PC-3 (cell line): ENCODE measurements at regions of chr18 and their contacts with region 1.

Region 1: DNA sequence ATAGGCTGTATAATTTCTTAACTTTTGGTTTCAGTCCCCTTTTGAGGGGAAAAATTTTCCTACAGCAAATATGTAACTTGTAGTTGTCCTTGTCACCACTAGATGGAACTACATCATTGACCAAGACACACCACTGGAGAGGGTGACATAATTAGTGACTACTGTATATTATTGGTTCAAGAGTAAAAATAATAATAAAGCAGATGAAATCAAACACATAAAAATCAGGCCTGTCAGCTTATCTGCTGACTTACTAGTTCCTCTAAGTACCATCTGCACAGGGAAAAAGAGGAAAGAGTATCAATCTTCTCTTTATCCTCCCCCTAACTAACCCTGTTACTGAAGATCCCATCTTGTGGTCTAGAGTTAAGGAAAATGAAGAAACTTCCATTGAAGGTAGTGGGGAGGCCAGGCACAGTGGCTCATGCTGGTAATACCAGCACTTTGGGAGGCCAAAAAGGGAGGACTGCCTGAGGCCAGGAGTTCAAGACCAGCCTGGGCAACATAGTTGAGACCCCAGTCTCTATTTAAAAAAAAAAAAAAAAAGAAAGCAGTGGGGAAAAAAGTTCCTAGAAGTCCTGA is 29.6 kb upstream of the ENOSF1 start:
- DNase-seq: peak; percentile 53
- ATAC-seq: peak; percentile 81
- H3K4me3 ChIP-seq: no peak overlapping the region
- H3K27ac ChIP-seq: no peak overlapping the region
- H3K4me1 ChIP-seq: no peaks in the 10 kb centered on the region
- H3K27me3 ChIP-seq: no peaks in the 10 kb centered on the region
- CTCF ChIP-seq: peak; percentile 86

Region 2: DNA sequence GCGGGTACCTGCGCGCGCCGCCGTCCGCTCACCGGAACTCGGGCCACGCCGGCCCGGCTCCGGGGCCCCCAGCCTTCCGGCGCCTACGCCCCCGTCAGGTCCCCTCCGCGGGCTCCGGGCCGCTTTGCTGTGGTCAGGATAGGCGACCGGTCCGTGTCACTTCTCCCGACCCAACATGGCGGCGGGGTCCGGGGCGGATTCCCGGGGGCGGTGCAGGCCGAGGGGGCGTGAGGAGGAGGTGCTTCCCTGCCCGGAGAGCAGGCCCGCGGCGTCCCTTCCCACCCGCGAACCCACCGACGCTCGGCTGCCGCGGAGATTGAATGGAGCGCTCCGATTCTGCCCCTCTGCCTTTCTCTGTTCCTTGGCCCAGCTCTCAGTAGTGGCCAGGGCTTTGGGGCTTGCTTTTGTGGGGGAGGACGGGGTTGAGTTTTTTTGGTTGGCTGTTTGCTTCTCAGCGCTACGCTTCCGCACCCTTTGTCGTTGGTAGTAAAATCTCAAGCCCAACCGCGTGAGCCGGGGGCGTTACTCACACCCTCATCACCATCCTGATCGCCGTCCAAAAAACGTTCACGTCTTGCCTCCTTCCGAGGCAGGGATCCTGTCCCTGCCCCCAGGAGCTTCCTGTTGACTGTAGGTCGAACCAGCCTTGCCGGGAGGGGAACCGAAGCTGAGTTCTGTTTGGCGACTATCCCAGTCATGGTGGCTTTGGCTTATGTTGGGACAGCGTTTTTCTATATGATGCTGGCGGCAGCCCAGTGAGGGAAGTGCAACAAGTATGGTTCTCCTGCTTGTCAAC is 70.6 kb after region 1 on chr18:
- CTCF ChIA-PET with region 1: no interaction called
- POLR2A ChIA-PET with region 1: no interaction called
- intact Hi-C with region 1: loop called (anchors 5 kb)
- DNase-seq: peak; percentile 95
- ATAC-seq: peak; percentile 67
- H3K4me3 ChIP-seq: peak overlapping the region; percentile 100
- H3K27ac ChIP-seq: peak overlapping the region; percentile 97
- H3K4me1 ChIP-seq: peaks cover 12% of the 10 kb centered on the region
- H3K27me3 ChIP-seq: no peaks in the 10 kb centered on the region
- CTCF ChIP-seq: no peak

Region 3: GRCh38 chr18:830315-830901 is 88.4 kb after region 1 on chr18:
- CTCF ChIA-PET with region 1: interaction called, 4 read pairs
- POLR2A ChIA-PET with region 1: no interaction called
- intact Hi-C with region 1: loop called (anchors 1 kb)
- DNase-seq: no peak
- ATAC-seq: peak; percentile 21; the same call in 1 of the 2 replicates
- H3K4me3 ChIP-seq: no peak overlapping the region
- H3K27ac ChIP-seq: no peak overlapping the region
- H3K4me1 ChIP-seq: peaks cover 6% of the 10 kb centered on the region; the same call in 1 of the 2 replicates
- H3K27me3 ChIP-seq: no peaks in the 10 kb centered on the region
- CTCF ChIP-seq: no peak

Region 4: GRCh38 chr18:839224-840022 is 97.4 kb after region 1 on chr18:
- CTCF ChIA-PET with region 1: interaction called, 6 read pairs
- POLR2A ChIA-PET with region 1: no interaction called
- intact Hi-C with region 1: loop called (anchors 2 kb)
- DNase-seq: peak; percentile 93
- ATAC-seq: peak; percentile 92
- H3K4me3 ChIP-seq: no peak overlapping the region
- H3K27ac ChIP-seq: no peak overlapping the region
- H3K4me1 ChIP-seq: peaks cover 11% of the 10 kb centered on the region
- H3K27me3 ChIP-seq: no peaks in the 10 kb centered on the region
- CTCF ChIP-seq: peak; percentile 97